Psoas muscle (tissue), 8 donors: ENCODE measurements at regions of chr1 and their contacts with region 1.

Region 1: DNA sequence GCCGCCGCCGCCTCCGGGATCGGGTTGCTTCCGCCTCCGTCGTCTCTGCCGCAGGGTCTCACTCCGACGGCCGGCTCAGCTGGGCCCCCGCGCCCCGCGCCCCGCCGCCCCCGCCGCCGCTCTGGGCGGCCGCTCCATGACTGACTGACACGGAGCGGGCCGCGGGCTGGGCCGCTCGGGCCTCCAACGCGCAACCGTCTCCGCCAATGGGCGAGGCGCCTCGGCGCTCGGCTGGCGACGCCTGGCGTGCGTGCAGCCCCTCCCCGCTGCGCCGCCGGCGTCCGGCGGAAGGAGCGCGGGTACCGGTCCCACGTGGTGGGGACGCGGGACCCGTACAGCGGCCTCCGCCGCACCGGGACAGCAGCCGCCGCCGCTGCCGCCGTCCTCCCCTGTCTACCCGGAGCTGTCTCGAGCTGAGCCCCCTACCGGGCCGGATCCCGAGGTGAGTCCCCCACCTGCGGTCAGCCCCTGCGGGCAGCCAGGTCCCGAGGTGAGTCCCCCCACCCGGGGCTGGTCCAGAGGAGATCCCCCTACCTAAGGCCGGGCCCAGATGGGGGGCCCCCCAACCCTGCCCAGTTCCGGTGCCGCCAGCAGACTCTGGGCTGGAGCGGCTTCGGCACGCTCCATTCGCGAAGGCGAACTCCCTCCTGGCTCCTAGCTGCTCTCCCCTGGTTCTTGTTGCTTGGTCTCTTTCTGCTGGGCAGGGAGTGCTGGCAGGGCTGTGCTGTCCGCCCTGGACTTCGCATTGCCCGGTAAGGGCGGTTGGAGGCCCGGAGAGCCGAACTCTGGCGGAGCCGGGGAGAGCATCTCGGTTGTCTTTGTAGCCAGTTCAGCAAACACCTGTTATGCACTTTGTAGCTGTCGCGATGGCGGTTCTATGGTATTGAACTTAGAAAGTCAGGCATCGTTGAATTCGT is at the starts of genes TAF5L and URB2:
- DNase-seq: peak; percentile 90 to 95
- ATAC-seq: peak; percentile 87 to 96 (median 90)
- H3K4me3 ChIP-seq: peak within 1 kb of the TSS; percentile 98
- H3K27ac ChIP-seq: peak within 1 kb of the TSS; percentile 96
- H3K4me1 ChIP-seq: peaks cover 45% of the 10 kb centered on the region
- H3K27me3 ChIP-seq: no peaks in the 10 kb centered on the region
- CTCF ChIP-seq: no peak
- total RNA-seq, gene TAF5L: 8.5 to 49.0 (median 28.6) TPM
- total RNA-seq, gene URB2: 8.3 to 18.2 (median 16.8) TPM

Region 2: DNA sequence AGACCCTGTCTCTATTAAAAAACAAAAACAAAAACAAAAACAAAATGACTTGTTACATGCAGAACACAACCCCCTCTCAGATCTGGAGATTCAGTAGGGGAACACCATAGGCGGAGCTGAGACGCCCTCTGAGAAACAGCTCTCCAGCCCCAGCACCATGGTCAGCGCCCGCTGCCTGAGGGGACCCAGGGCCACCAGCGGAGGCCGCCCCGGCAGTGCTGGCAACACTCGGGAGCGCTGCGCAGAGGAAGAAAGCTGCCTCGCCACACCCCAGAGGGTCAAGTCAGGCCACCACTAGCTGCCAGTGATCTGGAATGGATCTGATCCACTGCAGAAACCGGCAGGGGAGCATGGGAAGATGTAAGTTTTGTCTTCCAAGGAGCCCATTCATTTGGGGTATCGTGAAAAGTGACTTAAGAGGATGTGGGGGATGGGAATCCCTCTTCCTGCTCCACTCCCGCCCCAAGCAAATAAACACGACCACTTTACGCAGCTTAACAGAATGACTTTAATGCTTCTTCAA is 195.4 kb before region 1 on chr1:
- intact Hi-C with region 1: loop called in 1 of 2 experiments (anchors 10 kb)
- DNase-seq: peak; percentile 83 to 94
- ATAC-seq: peak; percentile 31 to 70 (median 55)
- H3K4me3 ChIP-seq: peak overlapping the region; percentile 70
- H3K27ac ChIP-seq: peak overlapping the region; percentile 97
- H3K4me1 ChIP-seq: peaks cover 22% of the 10 kb centered on the region
- H3K27me3 ChIP-seq: peaks cover 0 to 20% (median 0%) of the 10 kb centered on the region in 3 donors
- CTCF ChIP-seq: no peak

Region 3: GRCh38 chr1:229558571-229559335 is 67.4 kb before region 1 on chr1 and contains the start of gene ABCB10:
- intact Hi-C with region 1: loop called (anchors 1 to 2 kb)
- DNase-seq: peak; percentile 96 to 98
- ATAC-seq: peak; percentile 90 to 95 (median 94)
- H3K4me3 ChIP-seq: peak within 1 kb of the TSS; percentile 94
- H3K27ac ChIP-seq: peak within 1 kb of the TSS; percentile 92
- H3K4me1 ChIP-seq: peaks cover 34% of the 10 kb centered on the region
- H3K27me3 ChIP-seq: no peaks in the 10 kb centered on the region
- CTCF ChIP-seq: peak; percentile 75
- total RNA-seq, gene ABCB10: 9.8 to 20.8 (median 17.5) TPM

Region 4: DNA sequence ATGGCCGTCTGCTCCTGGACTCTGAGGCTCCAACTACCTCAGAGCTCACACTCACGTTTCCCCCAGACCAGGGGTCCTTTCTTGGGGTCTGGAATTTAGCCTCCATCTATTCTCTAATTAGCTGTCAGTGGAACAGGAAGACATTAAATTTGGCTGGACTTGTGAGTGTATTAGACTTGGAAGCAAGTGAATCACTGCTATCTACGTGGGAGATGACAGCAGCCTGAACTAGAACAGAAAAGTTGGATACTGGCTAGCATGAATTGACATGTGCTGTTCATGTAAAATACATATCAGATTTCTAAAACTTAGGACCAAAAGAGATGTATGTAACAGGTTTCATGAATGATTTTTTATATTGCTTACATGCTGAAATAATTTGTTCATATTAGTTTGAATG is 28.3 kb before region 1 on chr1:
- intact Hi-C with region 1: no loop called
- DNase-seq: no peak
- ATAC-seq: peak; percentile 52 to 82 (median 69)
- H3K4me3 ChIP-seq: peak overlapping the region; percentile 13
- H3K27ac ChIP-seq: peak overlapping the region; percentile 84
- H3K4me1 ChIP-seq: peaks cover 24% of the 10 kb centered on the region
- H3K27me3 ChIP-seq: no peaks in the 10 kb centered on the region
- CTCF ChIP-seq: no peak